ENCODE measurements at regions of chr9 and their contacts with region 1.

Region 1: DNA sequence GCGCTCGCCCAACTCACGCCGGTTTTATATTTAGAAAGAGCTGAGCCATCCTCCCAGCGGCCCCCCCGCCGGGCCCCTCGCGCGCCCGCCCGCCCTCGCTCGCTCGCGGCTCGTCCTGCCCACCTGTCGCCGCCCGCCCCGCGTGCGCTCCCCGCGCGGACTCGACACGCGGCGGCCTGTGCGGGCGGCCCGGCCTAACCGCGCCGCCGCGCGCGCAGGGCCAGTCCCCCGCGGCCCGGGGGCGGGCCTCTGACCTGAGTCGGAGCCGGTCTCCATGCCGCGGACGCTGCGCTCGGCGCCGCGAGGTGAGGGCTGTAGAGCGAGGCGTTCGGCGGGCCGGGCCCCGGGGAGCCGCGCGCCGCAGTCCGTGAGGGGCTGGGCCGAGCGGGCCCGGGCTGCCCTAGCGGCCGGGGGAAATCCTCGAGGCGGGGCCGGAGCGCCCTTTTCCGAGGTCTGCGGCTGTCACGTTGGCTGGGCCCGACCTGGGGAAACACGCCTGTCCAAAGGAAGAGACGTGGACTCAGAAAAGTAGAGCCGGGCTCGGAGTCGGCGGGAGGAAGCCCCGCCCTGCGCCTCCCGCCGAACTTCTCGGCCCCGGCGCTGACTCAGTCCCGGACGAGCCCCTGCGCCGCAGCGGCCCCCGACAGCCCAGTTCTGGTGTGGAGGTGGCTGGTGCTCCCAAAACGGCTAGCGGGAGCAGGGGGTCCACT is at the start of gene ECPAS:
- DNase-seq: peak; percentile 71 to 83
- H3K4me3 ChIP-seq: peak within 1 kb of the TSS; percentile 93
- H3K27ac ChIP-seq: peak within 1 kb of the TSS; percentile 94
- H3K4me1 ChIP-seq: peaks cover 19% of the 10 kb centered on the region
- H3K27me3 ChIP-seq: no peaks in the 10 kb centered on the region
- CTCF ChIP-seq: no peak
- total RNA-seq, gene ECPAS: 79.3 and 123 TPM in 2 replicates

Region 2: DNA sequence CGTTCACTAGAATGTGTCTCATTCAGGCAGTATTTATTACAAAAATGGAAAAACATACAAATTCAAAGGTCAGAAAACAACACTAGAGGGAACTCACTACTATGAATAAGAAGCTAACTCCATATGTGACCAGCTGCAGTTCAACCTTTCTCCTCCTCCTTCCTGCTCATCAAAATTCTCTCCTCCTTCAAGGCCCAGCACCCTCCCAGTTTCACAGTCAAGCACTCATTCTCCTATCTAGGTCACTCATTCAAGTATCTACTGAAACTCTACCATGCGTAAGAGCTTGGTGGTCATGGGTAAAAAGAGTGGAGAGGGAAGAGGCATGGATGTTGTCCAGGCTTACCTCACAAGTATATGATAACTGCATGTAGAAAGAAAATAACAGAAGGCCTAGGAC is 27.5 kb before region 1 on chr9:
- CTCF ChIA-PET with region 1: no interaction called
- POLR2A ChIA-PET with region 1: no interaction called
- intact Hi-C with region 1: loop called (anchors 1 kb)
- DNase-seq: no peak
- H3K4me3 ChIP-seq: no peak overlapping the region
- H3K27ac ChIP-seq: no peak overlapping the region
- H3K4me1 ChIP-seq: no peaks in the 10 kb centered on the region
- H3K27me3 ChIP-seq: no peaks in the 10 kb centered on the region
- CTCF ChIP-seq: no peak

Measured in PC-9 (cell line).